ENCODE measurements at regions of chr3 and their contacts with region 1.

Region 1: DNA sequence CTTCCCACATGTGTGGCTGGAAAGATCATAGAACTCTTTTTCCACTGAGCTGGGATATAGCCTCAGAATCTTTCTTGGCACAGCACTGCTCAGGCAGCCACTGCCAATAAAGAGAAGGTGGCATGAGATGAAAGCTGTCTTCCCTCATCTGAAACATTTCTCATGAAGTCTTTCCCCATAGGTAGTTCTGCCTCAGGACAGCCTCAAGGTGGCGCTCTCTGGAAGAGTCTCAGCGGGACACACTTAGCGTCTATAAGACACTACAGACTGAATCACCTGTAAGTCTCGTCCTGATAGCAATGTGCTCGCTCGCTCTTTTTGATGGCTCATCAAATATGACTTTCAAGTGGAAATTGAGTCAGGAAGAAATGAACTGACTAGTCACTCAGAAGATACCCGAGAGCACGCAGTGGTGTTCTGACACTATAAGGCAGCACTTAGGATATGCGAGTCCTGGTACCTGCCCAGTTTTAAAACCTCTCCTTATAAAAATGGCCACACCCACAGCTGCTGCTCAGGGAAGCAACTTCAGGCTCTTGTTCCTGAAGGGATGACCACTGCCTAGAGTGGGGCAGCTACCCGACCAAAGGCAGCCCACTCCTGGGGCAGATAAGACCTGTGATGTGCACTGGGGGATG is 269.5 kb downstream of the SUCLG2 start:
- DNase-seq: no peak
- ATAC-seq: peak in 1 of 2 donors; percentile 39
- H3K4me3 ChIP-seq: no peak overlapping the region
- H3K27ac ChIP-seq: no peak overlapping the region
- H3K4me1 ChIP-seq: no peaks in the 10 kb centered on the region
- H3K27me3 ChIP-seq: no peaks in the 10 kb centered on the region
- CTCF ChIP-seq: peak in 3 of 5 experiments; percentile 17 to 43 (median 34)
- POLR2A ChIP-seq: no peak

Region 2: DNA sequence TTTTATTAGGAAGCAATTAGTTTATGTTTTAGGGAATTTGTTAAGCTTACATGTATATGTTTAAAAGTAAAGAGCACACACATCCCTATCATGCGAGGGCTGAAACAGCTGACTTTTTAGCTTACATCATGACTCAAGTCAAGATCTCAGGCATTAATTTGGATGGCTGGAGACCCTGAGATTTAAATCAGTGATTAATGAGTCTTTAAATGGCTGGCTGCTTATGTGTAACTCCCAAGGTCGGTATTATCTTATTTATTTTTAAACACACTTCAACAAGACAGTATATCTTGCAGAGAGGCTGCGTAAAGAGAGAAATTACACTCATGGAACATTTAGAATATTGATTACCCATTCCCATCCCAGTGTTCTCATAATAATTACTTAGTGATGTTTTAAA is 217.4 kb before region 1 on chr3:
- in situ Hi-C with region 1: no loop called
- intact Hi-C with region 1: no loop called
- DNase-seq: no peak
- ATAC-seq: no peak
- H3K4me3 ChIP-seq: no peak overlapping the region
- H3K27ac ChIP-seq: no peak overlapping the region
- H3K4me1 ChIP-seq: no peaks in the 10 kb centered on the region
- H3K27me3 ChIP-seq: no peaks in the 10 kb centered on the region
- CTCF ChIP-seq: no peak
- POLR2A ChIP-seq: no peak

Region 3: GRCh38 chr3:67558426-67558825 is 173.5 kb after region 1 on chr3:
- in situ Hi-C with region 1: no loop called
- intact Hi-C with region 1: loop called (anchors 10 kb)
- DNase-seq: no peak
- ATAC-seq: peak in 1 of 2 donors; percentile 30
- H3K4me3 ChIP-seq: no peak overlapping the region
- H3K27ac ChIP-seq: no peak overlapping the region
- H3K4me1 ChIP-seq: peaks cover 0 to 5% of the 10 kb centered on the region in 2 donors
- H3K27me3 ChIP-seq: no peaks in the 10 kb centered on the region
- CTCF ChIP-seq: no peak
- POLR2A ChIP-seq: no peak

Region 4: GRCh38 chr3:67783281-67784250 is 398.7 kb after region 1 on chr3:
- in situ Hi-C with region 1: no loop called
- intact Hi-C with region 1: loop called (anchors 10 kb)
- DNase-seq: no peak
- ATAC-seq: no peak
- H3K4me3 ChIP-seq: no peak overlapping the region
- H3K27ac ChIP-seq: no peak overlapping the region
- H3K4me1 ChIP-seq: no peaks in the 10 kb centered on the region
- H3K27me3 ChIP-seq: no peaks in the 10 kb centered on the region
- CTCF ChIP-seq: no peak
- POLR2A ChIP-seq: no peak

Measured in gastrocnemius medialis (tissue), 4 donors.